Dendritic cell treated with granulocyte-macrophage colony-stimulating factor and Interleukin-4, amounts not matched to agents 40 ng/mL and 50 ng/mL, for 4 days (primary cell): ENCODE measurements at regions of chr2 and their contacts with region 1.

Region 1: DNA sequence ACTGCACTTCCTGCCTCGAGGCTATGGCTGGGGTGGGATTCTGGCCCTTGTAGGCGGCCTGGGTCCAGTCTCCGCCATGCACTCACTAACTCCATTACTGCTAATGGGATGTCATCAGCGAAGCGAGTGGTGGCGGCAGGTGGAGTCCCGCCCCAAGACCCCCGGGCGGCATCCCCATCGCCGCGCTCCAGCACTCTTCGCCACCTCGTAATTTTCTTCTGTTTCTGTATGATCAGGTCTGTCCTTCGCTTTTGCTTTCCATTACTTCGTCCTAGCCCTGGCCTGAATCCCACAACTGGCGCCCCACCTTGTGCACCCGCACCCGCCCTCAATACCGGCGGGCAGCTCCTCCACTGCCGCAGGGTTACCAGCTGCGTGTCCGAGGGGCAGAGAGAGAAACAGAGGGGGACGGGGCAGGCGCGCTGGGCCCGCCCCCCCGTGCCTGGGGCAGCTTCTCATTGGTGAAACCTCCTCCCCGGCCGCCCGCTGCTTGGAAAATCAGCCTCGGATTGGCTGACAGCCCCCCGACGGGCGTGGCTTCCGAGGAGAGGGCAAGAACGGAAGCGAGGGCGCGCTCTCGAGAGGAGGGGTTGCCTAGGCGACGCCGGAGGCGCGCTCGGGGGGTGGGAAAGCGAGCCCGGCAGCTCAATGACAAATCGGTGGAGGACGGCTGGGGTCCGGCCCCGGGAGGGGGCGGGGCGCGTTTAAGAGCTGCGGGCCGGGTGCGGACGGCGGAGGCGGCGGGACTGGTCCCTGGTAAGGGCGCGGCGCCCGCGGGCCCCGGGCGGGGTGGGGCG is at the start of gene RALB:
- H3K4me3 Mint-ChIP-seq: peak within 1 kb of the TSS; percentile 100
- H3K27ac Mint-ChIP-seq: peak within 1 kb of the TSS; percentile 95
- H3K4me1 Mint-ChIP-seq: peaks cover 50% of the 10 kb centered on the region
- H3K27me3 Mint-ChIP-seq: peaks cover 21% of the 10 kb centered on the region

Region 2: DNA sequence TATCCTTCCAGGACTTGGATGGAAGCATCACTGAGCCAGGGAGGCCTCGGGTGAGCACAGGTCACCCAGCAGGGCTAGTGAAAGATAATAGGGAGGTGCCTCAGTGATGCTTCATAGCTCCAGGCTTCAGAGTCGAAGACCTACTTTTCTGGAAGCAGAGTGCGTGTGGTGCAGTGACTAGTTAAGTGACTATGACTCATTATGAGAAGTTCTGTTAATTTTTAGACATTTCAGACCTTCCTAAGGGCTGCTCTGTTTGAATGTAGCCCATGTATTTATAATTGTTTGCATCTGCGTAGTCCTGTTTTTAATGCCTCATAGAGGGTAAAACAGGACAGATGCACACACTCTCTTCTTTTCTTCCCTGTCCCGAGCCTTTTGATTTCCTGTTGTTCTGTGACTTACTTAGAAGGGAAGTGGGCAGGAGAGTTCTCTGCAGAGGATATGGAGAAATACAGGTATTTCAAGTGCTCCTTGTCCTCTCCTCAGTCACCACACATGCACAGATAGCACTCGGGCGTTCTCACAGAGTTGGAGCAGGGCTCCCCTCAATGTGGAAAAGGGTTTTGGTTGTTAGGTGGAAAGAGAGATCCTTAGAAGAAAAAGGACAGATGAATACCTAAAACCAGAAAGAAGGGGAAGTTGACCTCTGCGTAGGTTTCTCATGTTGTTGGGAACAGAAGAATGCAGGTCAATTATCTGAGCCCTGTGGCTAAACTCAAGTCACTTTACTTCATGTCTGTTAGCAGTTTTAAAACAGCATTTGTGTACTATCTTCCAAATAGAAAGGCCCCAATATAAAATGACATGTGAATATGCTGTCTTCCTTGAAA is 35.0 kb after region 1 on chr2:
- intact Hi-C with region 1: loop called (anchors 5 kb)
- H3K4me3 Mint-ChIP-seq: no peak overlapping the region
- H3K27ac Mint-ChIP-seq: peak overlapping the region; percentile 10
- H3K4me1 Mint-ChIP-seq: peaks cover 15% of the 10 kb centered on the region
- H3K27me3 Mint-ChIP-seq: no peaks in the 10 kb centered on the region

Region 3: DNA sequence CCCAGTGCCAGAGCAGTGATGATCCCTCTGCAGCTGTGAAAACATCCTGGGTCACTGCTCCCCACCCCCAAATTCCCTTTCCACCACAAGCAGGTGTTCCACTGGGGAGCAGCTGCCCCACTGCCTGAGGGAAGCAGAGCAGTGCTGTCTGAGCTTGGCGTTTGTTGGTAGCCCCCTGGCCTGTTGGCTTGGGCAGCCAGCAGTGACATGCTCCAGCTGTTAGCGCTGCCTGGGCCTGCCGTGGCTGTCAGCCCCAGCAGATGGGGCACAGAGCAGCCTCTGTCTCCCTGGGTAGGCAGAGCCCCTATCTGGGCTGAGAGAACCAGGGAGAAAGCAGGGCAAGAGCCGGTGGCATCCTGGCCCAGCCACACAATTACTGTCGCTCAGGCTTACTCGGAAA is 730.9 kb after region 1 on chr2:
- intact Hi-C with region 1: no loop called
- H3K4me3 Mint-ChIP-seq: no peak overlapping the region
- H3K27ac Mint-ChIP-seq: no peak overlapping the region
- H3K4me1 Mint-ChIP-seq: no peaks in the 10 kb centered on the region
- H3K27me3 Mint-ChIP-seq: peaks cover 4% of the 10 kb centered on the region